ENCODE measurements at regions of chr12 and their contacts with region 1.

Region 1: GRCh38 chr12:64419696-64420095 is 15.5 kb downstream of the XPOT start:
- DNase-seq: no peak
- ATAC-seq: no peak

Region 2: GRCh38 chr12:64486657-64487056 is 67.0 kb after region 1 on chr12:
- intact Hi-C with region 1: loop called (anchors 5 kb)
- DNase-seq: no peak
- ATAC-seq: no peak

Region 3: DNA sequence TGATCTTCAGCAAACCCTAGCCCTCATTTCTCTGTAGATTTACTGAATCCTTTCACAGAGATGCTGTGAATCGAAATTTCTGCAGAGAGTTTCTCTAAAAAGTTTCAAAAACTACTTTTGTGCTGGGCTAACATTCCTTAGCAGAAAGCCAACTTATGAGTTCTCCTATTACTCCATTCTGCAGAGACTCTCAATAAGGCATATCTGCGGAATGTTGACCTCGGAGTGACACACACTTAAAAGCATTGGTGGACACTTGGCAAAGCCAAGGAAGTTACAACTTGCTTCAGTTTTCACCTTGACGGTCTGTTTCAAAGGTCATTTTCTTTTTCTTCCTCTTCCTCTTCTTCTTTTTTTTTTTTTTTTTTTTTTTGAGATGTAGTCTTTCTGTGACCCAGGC is 625.6 kb after region 1 on chr12:
- intact Hi-C with region 1: no loop called
- DNase-seq: no peak
- ATAC-seq: no peak

Measured in Right ventricle myocardium inferior (tissue), 1 donor.